ENCODE measurements at regions of chr15 and their contacts with region 1.

Region 1: GRCh38 chr15:99104788-99105513 is at the start of gene SYNM:
- DNase-seq: peak; percentile 85
- H3K4me3 Mint-ChIP-seq: peak within 1 kb of the TSS; percentile 77
- H3K27ac Mint-ChIP-seq: peak within 1 kb of the TSS; percentile 54
- H3K4me1 Mint-ChIP-seq: peaks cover 11% of the 10 kb centered on the region
- H3K27me3 Mint-ChIP-seq: peaks cover 45% of the 10 kb centered on the region
- total RNA-seq, gene SYNM: 0.79 and 1.1 TPM in 2 replicates

Region 2: DNA sequence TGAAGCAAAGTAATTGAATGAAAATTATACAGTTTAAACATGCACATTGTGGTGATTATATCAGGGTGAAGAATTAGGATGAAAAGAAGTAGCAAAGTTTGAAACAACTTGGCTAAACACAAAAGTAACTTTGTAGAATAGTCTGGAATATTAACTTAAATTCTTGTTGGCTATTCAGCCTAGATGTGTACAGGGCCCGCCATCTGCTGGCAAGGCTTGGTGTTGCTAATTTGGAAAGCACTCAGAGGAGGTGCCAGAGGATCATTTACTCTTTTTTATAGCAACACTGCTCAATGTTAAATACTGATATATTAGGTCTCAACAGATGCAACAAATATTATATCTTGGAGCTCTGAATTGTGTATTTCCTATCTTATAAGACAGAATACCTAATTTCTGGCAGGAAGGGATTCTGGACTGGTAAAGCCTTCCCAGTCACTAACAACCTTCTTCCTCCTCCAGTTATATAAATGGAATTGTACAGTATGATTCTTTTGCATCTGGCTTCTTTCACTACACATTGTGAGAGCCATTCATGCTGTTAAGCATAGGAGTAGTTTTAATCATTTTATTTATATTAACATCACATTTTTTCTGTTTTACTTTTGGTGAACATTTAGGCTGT is 108.3 kb after region 1 on chr15:
- intact Hi-C with region 1: loop called (anchors 1 kb)
- DNase-seq: peak; percentile 89
- H3K4me3 Mint-ChIP-seq: no peak overlapping the region
- H3K27ac Mint-ChIP-seq: no peak overlapping the region
- H3K4me1 Mint-ChIP-seq: no peaks in the 10 kb centered on the region
- H3K27me3 Mint-ChIP-seq: peaks cover 2% of the 10 kb centered on the region

Region 3: GRCh38 chr15:99733268-99734039 is 628.5 kb after region 1 on chr15 and contains the start of gene LYSMD4:
- intact Hi-C with region 1: loop called (anchors 10 kb)
- DNase-seq: peak; percentile 99
- H3K4me3 Mint-ChIP-seq: peak within 1 kb of the TSS; percentile 86
- H3K27ac Mint-ChIP-seq: peak within 1 kb of the TSS; percentile 96
- H3K4me1 Mint-ChIP-seq: peaks cover 27% of the 10 kb centered on the region
- H3K27me3 Mint-ChIP-seq: no peaks in the 10 kb centered on the region
- total RNA-seq, gene LYSMD4: 6.4 and 6.6 TPM in 2 replicates

Measured in activated CD4-positive, alpha-beta T cell treated with anti-CD3 and anti-CD28 coated beads, Interleukin-2, amount 10 ng/mL, durations not matched to agents 24 days and 14 days (primary cell).